PC-9 (cell line): ENCODE measurements at regions of chr11 and their contacts with region 1.

Region 1: DNA sequence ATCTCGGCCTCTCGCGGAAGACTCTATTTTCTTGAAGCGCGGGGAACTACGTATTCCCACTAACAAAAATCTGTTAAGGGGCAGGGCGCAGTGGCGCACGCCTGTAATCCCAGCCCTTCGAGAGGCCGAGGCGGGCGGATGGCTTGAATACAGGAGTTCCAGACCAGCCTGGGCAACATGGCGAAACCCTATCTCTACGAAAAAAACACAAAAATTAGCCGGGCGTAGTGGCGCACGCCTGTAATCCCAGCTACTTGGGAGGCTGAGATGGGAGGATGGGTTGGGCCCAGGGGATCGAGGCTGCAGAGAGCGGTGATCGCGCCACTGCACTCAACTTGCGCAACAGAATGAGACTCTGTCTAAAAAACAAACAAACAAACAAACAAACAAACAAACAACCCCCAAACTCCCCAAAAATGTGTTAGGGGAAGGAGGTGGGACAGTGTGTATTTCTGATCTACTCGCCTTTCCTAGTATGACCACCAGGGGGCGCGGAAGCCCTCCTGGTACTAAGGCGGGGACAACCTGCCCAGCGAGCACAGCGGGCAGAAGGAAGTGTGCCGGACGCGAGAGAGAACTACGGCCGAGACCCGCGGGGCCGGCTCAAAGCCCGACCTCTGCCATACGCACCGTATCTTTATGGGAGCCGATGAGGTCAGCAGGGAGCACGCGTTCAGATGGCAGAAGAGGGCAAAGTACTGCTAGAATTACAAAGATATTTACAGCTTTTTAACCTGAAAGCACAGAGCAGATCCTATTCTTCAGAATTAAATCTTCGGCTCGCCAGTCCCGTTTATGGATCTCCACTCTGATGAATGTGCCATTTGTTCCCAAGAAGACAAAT is 1.3 kb upstream of the STX3 start:
- DNase-seq: peak; percentile 68 to 81
- H3K4me3 ChIP-seq: peak overlapping the region; percentile 92
- H3K27ac ChIP-seq: no peak overlapping the region
- H3K4me1 ChIP-seq: peaks cover 19% of the 10 kb centered on the region
- H3K27me3 ChIP-seq: no peaks in the 10 kb centered on the region
- CTCF ChIP-seq: peak; percentile 98

Region 2: GRCh38 chr11:59550368-59550841 is 203.5 kb before region 1 on chr11:
- CTCF ChIA-PET with region 1: no interaction called
- POLR2A ChIA-PET with region 1: interaction called, 4 read pairs
- intact Hi-C with region 1: loop called (anchors 5 kb)
- DNase-seq: peak; percentile 91 to 94
- H3K4me3 ChIP-seq: peak overlapping the region; percentile 71
- H3K27ac ChIP-seq: peak overlapping the region; percentile 85
- H3K4me1 ChIP-seq: peaks cover 31% of the 10 kb centered on the region
- H3K27me3 ChIP-seq: no peaks in the 10 kb centered on the region
- CTCF ChIP-seq: peak; percentile 56; the same call in 1 of the 2 replicates

Region 3: GRCh38 chr11:59776210-59777066 is 22.6 kb after region 1 on chr11:
- CTCF ChIA-PET with region 1: interaction called, 4 read pairs
- POLR2A ChIA-PET with region 1: interaction called, 6 read pairs
- intact Hi-C with region 1: loop called (anchors 1 kb)
- DNase-seq: peak; percentile 57 to 97
- H3K4me3 ChIP-seq: no peak overlapping the region
- H3K27ac ChIP-seq: peak overlapping the region; percentile 28
- H3K4me1 ChIP-seq: peaks cover 48% of the 10 kb centered on the region
- H3K27me3 ChIP-seq: no peaks in the 10 kb centered on the region
- CTCF ChIP-seq: no peak

Region 4: GRCh38 chr11:59802639-59803176 is 48.8 kb after region 1 on chr11:
- CTCF ChIA-PET with region 1: interaction called, 16 read pairs
- POLR2A ChIA-PET with region 1: no interaction called
- intact Hi-C with region 1: loop called (anchors 1 kb)
- DNase-seq: peak; percentile 39 to 48
- H3K4me3 ChIP-seq: no peak overlapping the region
- H3K27ac ChIP-seq: no peak overlapping the region
- H3K4me1 ChIP-seq: peaks cover 25% of the 10 kb centered on the region
- H3K27me3 ChIP-seq: no peaks in the 10 kb centered on the region
- CTCF ChIP-seq: peak; percentile 91

Region 5: DNA sequence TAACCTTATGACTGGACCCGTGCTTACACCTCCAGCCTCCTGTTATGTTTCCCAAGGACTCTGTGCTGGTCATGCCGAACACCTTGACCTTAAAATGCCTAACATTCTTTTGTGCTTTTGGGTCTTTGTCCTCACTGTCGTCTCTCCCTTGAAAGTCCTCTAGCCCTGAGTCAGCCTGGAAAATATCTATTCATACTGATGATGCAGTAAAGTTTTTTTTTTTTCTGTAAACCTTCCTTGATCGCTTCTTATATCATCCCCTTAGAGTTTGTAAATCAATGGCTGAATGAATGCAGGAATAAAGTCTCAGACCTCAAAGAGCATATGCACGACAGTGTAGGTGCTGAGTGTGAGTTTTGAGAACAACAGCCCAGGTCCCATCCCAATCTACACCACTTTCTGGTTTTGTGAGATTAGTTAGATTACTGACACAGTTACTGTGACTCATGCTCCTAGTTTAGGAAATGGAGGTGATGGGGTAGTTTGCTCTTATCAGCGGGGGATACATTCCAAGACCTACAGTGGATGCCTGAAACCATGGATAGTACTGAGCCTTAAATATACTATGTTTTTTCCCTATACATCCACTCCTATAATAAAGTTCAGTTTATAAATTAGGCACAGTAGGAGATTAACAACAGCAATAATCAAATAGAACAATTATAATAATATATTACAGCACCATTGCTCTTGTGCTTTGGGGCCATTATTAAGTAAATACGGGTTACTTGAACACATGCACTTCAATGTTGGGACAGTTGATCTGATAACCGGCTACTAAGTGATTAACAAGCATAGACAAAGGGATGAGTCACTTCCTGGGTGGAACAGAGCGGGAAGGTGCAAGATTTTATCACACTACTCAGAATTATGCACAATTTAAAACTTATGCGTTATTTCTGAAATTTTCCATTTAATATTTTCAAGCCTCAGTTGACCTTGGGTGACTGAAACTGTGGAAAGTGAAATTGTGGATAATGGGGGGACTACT is 103.9 kb after region 1 on chr11:
- CTCF ChIA-PET with region 1: no interaction called
- POLR2A ChIA-PET with region 1: no interaction called
- intact Hi-C with region 1: loop called (anchors 2 kb)
- DNase-seq: peak; percentile 67 to 80
- H3K4me3 ChIP-seq: no peak overlapping the region
- H3K27ac ChIP-seq: peak overlapping the region; percentile 78
- H3K4me1 ChIP-seq: peaks cover 33% of the 10 kb centered on the region
- H3K27me3 ChIP-seq: no peaks in the 10 kb centered on the region
- CTCF ChIP-seq: no peak

Region 6: GRCh38 chr11:60762851-60763691 is 1009.2 kb after region 1 on chr11:
- CTCF ChIA-PET with region 1: no interaction called
- POLR2A ChIA-PET with region 1: interaction called, 15 read pairs
- intact Hi-C with region 1: no loop called
- DNase-seq: no peak
- H3K4me3 ChIP-seq: no peak overlapping the region
- H3K27ac ChIP-seq: no peak overlapping the region
- H3K4me1 ChIP-seq: no peaks in the 10 kb centered on the region
- H3K27me3 ChIP-seq: peaks cover 94% of the 10 kb centered on the region
- CTCF ChIP-seq: peak; percentile 63